Mammary epithelial cell (primary cell): ENCODE measurements at regions of chr2 and their contacts with region 1.

Region 1: GRCh38 chr2:46699934-46700256 is 215.7 kb downstream of the MCFD2 start:
- DNase-seq: peak; percentile 8
- H3K4me3 ChIP-seq: peak overlapping the region; percentile 66 to 90 (median 88)
- H3K27ac ChIP-seq: peak overlapping the region; percentile 52
- H3K4me1 ChIP-seq: peaks cover 12% of the 10 kb centered on the region
- H3K27me3 ChIP-seq: no peaks in the 10 kb centered on the region
- CTCF ChIP-seq: no peak

Region 2: GRCh38 chr2:46857893-46858701 is 158.2 kb after region 1 on chr2:
- CTCF ChIA-PET with region 1: no interaction called
- dilution Hi-C with region 1: no loop called
- in situ Hi-C with region 1: no loop called
- intact Hi-C with region 1: loop called (anchors 5 kb)
- DNase-seq: peak; percentile 45
- H3K4me3 ChIP-seq: no peak overlapping the region
- H3K27ac ChIP-seq: no peak overlapping the region
- H3K4me1 ChIP-seq: peaks cover 43% of the 10 kb centered on the region
- H3K27me3 ChIP-seq: no peaks in the 10 kb centered on the region
- CTCF ChIP-seq: no peak